B cell (primary cell): ENCODE measurements at regions of chr9 and their contacts with region 1.

Region 1: DNA sequence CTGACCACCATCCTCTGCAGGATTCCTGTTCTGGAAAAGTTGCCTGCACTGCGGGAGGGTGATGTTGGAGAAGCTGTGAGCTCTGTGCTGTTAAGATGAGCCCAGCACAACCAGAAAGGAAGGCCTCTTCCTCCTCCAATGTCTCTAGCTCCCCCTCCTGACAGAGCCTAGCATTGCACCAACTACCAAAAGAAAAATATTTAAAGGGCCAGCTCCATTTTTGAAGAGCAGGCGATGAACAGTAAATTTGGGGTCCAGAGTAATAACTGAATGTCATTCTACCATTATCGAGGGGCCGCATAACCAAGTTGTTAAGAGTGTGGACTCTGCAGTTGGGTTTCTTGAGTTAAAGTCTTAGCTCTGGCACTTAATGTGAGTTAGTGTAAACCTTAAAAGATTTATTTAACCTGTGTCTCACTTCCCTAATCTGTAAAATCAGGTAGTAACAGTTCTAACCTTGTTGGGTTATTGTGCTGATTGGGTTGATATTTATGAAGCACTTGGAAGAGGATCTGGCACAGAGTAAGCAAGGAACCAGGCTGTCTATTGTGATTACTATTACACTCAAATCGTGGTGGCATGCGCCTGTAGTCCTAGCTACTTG is 3.9 kb downstream of the TEX53 start:
- DNase-seq: peak; percentile 85
- ATAC-seq: peak; percentile 94
- H3K4me3 ChIP-seq: no peak overlapping the region
- H3K4me3 Mint-ChIP-seq: no peak overlapping the region
- H3K27ac ChIP-seq: peak overlapping the region in 1 of 2 donors; percentile 51
- H3K27ac Mint-ChIP-seq: no peak overlapping the region
- H3K4me1 ChIP-seq: peaks cover 22 to 24% of the 10 kb centered on the region in 2 donors
- H3K4me1 Mint-ChIP-seq: peaks cover 21% of the 10 kb centered on the region
- H3K27me3 ChIP-seq: no peaks in the 10 kb centered on the region
- H3K27me3 Mint-ChIP-seq: no peaks in the 10 kb centered on the region
- CTCF ChIP-seq: peak; percentile 96

Region 2: DNA sequence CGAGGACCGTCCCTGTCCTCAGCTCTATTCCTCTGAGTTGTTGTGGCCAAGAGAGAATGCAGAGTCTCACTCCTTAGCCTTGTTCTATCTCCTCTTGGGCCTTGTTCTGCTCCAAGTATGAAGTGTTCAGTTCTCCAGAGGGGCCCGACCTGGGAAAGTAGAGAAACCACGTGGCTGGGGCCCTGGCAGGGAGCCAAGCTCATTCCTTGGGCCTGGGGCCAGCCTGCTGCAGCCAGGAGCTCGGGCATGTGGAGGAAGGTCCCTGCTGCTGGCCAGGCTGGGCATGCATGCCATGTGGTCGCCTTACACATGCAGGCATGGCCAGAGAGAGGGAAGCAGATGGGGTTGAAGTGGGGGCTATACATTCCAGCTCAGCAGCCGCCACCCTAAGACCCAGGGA is 437.6 kb before region 1 on chr9:
- CTCF ChIA-PET with region 1: no interaction called
- POLR2A ChIA-PET with region 1: no interaction called
- intact Hi-C with region 1: no loop called
- DNase-seq: no peak
- ATAC-seq: no peak
- H3K4me3 ChIP-seq: no peak overlapping the region
- H3K4me3 Mint-ChIP-seq: no peak overlapping the region
- H3K27ac ChIP-seq: no peak overlapping the region
- H3K27ac Mint-ChIP-seq: no peak overlapping the region
- H3K4me1 ChIP-seq: no peaks in the 10 kb centered on the region
- H3K4me1 Mint-ChIP-seq: no peaks in the 10 kb centered on the region
- H3K27me3 ChIP-seq: no peaks in the 10 kb centered on the region
- H3K27me3 Mint-ChIP-seq: peaks cover 2% of the 10 kb centered on the region
- CTCF ChIP-seq: no peak

Region 3: GRCh38 chr9:114348906-114349482 is 304.7 kb before region 1 on chr9:
- CTCF ChIA-PET with region 1: interaction called, 11 read pairs
- POLR2A ChIA-PET with region 1: no interaction called
- intact Hi-C with region 1: no loop called
- DNase-seq: peak; percentile 91
- ATAC-seq: peak; percentile 94
- H3K4me3 ChIP-seq: no peak overlapping the region
- H3K4me3 Mint-ChIP-seq: peak overlapping the region; percentile 83
- H3K27ac ChIP-seq: peak overlapping the region; percentile 68 to 80
- H3K27ac Mint-ChIP-seq: peak overlapping the region; percentile 97
- H3K4me1 ChIP-seq: peaks cover 26 to 36% of the 10 kb centered on the region in 2 donors
- H3K4me1 Mint-ChIP-seq: peaks cover 44% of the 10 kb centered on the region
- H3K27me3 ChIP-seq: no peaks in the 10 kb centered on the region
- H3K27me3 Mint-ChIP-seq: no peaks in the 10 kb centered on the region
- CTCF ChIP-seq: no peak

Region 4: DNA sequence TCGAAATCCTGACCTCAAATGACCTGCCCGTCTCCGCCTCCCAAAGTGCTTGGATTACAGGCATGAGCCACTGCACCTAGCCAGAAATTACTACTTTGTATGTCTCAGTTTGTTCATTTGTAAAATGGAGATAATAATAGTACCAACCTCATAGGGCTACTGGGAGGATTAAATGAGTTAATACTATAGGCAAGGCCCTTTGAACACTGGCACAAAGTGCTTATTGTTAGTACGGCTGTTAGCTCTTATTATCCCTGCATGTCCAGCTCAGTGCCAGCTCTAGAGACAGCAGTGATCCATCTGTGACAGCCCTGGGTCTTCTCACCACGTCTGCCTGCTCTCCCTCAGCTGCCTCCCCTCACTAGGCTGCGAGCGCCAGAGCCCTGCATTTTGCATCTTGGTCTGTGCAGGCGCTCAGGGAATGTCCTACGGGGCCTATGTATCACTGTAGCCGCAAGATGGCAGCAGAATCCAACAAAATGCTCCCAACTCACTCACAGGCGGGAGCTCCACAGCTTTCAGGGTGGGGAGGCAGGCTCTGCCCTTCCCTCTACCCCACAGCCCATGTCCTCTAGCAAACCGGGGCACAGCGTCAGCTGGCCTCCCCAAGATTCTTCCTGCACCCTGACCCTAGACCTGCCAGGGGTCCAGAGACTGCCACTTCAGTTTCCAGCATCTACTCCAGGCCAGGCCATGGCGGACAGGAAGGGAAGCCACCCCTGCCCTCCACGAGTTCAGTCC is 248.2 kb before region 1 on chr9:
- CTCF ChIA-PET with region 1: interaction called, 144 read pairs
- POLR2A ChIA-PET with region 1: interaction called, 3 read pairs
- intact Hi-C with region 1: loop called (anchors 1 kb)
- DNase-seq: peak; percentile 89
- ATAC-seq: peak; percentile 99
- H3K4me3 ChIP-seq: no peak overlapping the region
- H3K4me3 Mint-ChIP-seq: no peak overlapping the region
- H3K27ac ChIP-seq: no peak overlapping the region
- H3K27ac Mint-ChIP-seq: peak overlapping the region; percentile 8
- H3K4me1 ChIP-seq: peaks cover 8 to 9% of the 10 kb centered on the region in 2 donors
- H3K4me1 Mint-ChIP-seq: peaks cover 4% of the 10 kb centered on the region
- H3K27me3 ChIP-seq: no peaks in the 10 kb centered on the region
- H3K27me3 Mint-ChIP-seq: no peaks in the 10 kb centered on the region
- CTCF ChIP-seq: peak; percentile 87

Region 5: DNA sequence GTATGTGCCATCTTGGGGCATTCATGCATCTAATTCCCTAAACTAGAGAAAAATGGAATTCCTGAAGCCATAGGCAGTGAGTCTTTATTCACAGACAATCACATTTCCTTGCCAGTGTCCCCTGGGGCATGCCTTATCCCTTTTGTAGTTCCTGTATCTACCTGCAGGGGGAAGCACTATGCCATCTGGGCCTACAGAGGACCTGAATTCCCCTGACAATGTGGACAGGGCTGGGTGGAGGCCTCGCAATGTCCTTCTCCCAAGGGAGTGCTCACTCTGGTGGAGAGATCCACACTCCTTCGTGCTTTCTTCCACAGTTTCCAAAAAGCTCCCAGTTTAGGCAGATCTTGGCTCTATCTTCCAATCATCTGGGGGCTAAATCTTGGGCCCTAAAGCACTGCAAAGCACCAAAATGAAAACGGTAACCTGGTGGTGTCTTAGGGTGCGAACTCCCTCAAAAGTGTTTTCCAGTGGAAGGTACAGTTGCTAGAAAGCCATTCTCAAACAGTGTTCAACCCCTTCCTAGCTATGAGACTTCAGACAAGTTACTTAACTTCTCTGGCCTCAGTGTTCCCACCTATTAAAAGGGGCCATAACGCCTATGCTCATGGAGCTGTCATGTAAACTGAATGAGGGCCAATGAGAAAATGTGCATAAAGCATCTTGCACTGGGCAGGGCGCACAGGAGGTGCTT is 165.9 kb before region 1 on chr9:
- CTCF ChIA-PET with region 1: interaction called, 80 read pairs
- POLR2A ChIA-PET with region 1: no interaction called
- intact Hi-C with region 1: loop called (anchors 1 kb)
- DNase-seq: peak; percentile 81
- ATAC-seq: peak; percentile 75
- H3K4me3 ChIP-seq: no peak overlapping the region
- H3K4me3 Mint-ChIP-seq: no peak overlapping the region
- H3K27ac ChIP-seq: no peak overlapping the region
- H3K27ac Mint-ChIP-seq: peak overlapping the region; percentile 16
- H3K4me1 ChIP-seq: peaks cover 22 to 23% of the 10 kb centered on the region in 2 donors
- H3K4me1 Mint-ChIP-seq: peaks cover 40% of the 10 kb centered on the region
- H3K27me3 ChIP-seq: no peaks in the 10 kb centered on the region
- H3K27me3 Mint-ChIP-seq: no peaks in the 10 kb centered on the region
- CTCF ChIP-seq: peak; percentile 90

Region 6: DNA sequence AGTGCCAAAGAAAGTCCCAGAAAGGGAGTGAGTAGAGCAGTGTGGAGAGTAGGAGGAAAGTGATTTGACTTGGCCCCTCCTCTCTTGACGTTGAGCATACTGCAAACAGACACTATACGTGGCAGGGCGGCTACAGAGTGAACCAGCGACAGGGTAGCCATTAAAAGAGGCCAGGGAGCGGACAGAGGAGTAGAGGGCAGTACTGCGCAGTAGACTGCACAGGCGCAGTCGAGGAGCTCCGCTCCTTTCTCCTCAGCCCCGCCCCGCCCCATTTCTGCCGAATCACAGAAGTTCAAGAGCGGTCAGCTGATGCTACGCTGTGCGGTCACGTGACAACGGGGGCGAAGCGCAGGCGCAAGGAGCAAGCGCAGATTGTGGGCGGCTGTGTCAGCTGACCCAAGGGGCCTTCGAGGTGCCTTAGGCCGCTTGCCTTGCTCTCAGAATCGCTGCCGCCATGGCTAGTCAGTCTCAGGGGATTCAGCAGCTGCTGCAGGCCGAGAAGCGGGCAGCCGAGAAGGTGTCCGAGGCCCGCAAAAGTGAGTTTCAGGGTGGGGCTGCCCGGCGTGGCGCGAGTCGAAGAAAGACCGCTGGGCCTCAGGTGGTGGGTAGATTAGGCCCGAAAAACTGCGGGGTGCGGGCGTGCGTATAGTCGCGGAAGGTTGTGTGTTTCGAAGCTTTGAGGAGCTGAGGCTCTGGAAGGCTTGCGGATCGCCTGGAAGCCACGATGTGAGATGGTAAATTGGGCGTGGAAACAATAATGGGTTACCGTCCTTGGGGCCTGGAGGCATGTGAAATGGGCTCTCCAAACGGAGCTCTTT is 66.1 kb before region 1 on chr9 and contains the start of gene ATP6V1G1:
- CTCF ChIA-PET with region 1: interaction called, 179 read pairs
- POLR2A ChIA-PET with region 1: interaction called, 7 read pairs
- intact Hi-C with region 1: loop called (anchors 1 kb)
- DNase-seq: peak; percentile 99
- ATAC-seq: peak; percentile 93
- H3K4me3 ChIP-seq: peak within 1 kb of the TSS; percentile 80 to 99 (median 96)
- H3K4me3 Mint-ChIP-seq: peak within 1 kb of the TSS; percentile 98
- H3K27ac ChIP-seq: peak within 1 kb of the TSS; percentile 93
- H3K27ac Mint-ChIP-seq: peak within 1 kb of the TSS; percentile 98
- H3K4me1 ChIP-seq: peaks cover 39 to 50% of the 10 kb centered on the region in 2 donors
- H3K4me1 Mint-ChIP-seq: peaks cover 47% of the 10 kb centered on the region
- H3K27me3 ChIP-seq: no peaks in the 10 kb centered on the region
- H3K27me3 Mint-ChIP-seq: no peaks in the 10 kb centered on the region
- CTCF ChIP-seq: no peak
- total RNA-seq, gene ATP6V1G1: 83.1 and 86.8 TPM in 2 replicates

Region 7: GRCh38 chr9:114641967-114642366 is 11.7 kb before region 1 on chr9:
- CTCF ChIA-PET with region 1: interaction called, 17 read pairs
- POLR2A ChIA-PET with region 1: no interaction called
- intact Hi-C with region 1: no loop called
- DNase-seq: no peak
- ATAC-seq: no peak
- H3K4me3 ChIP-seq: no peak overlapping the region
- H3K4me3 Mint-ChIP-seq: no peak overlapping the region
- H3K27ac ChIP-seq: peak overlapping the region in 1 of 2 donors; percentile 70
- H3K27ac Mint-ChIP-seq: peak overlapping the region; percentile 76
- H3K4me1 ChIP-seq: peaks cover 5 to 7% of the 10 kb centered on the region in 2 donors
- H3K4me1 Mint-ChIP-seq: peaks cover 9% of the 10 kb centered on the region
- H3K27me3 ChIP-seq: no peaks in the 10 kb centered on the region
- H3K27me3 Mint-ChIP-seq: no peaks in the 10 kb centered on the region
- CTCF ChIP-seq: no peak